OCI-LY7 (cell line): ENCODE measurements at regions of chr13 and their contacts with region 1.

Region 1: GRCh38 chr13:25001476-25002206 is 94.3 kb upstream of the PABPC3 start:
- DNase-seq: no peak
- H3K4me3 ChIP-seq: no peak overlapping the region
- H3K27ac ChIP-seq: no peak overlapping the region
- H3K4me1 ChIP-seq: no peaks in the 10 kb centered on the region
- CTCF ChIP-seq: no peak

Region 2: GRCh38 chr13:25037057-25037813 is 35.6 kb after region 1 on chr13:
- CTCF ChIA-PET with region 1: no interaction called
- POLR2A ChIA-PET with region 1: no interaction called
- intact Hi-C with region 1: loop called (anchors 1 kb)
- DNase-seq: peak; percentile 71
- H3K4me3 ChIP-seq: no peak overlapping the region
- H3K27ac ChIP-seq: no peak overlapping the region
- H3K4me1 ChIP-seq: no peaks in the 10 kb centered on the region
- CTCF ChIP-seq: peak; percentile 84

Region 3: DNA sequence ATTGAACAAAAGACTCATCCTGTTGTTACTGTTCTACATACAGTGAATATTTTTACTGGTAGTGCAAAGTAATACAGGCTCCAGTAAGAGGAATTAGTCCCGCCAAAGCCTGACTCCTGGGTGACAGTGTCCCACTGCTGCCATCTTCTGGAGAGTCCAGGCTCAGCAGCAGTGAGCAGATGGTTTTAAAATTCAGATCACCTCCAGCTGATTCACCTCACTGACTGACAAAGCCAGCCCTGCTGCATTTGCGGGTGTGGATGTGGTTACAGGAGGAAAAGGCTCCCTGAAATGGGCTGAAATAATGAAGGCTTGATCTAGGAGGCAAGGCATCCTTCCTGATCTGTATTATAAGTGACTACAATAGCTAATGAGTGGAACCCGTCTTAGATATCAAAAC is 112.6 kb after region 1 on chr13:
- CTCF ChIA-PET with region 1: no interaction called
- POLR2A ChIA-PET with region 1: no interaction called
- intact Hi-C with region 1: loop called (anchors 1 kb)
- DNase-seq: peak; percentile 79
- H3K4me3 ChIP-seq: no peak overlapping the region
- H3K27ac ChIP-seq: no peak overlapping the region
- H3K4me1 ChIP-seq: peaks cover 27% of the 10 kb centered on the region
- CTCF ChIP-seq: peak; percentile 94

Region 4: GRCh38 chr13:25171517-25172302 is 170.1 kb after region 1 on chr13 and contains the start of gene AMER2:
- CTCF ChIA-PET with region 1: no interaction called
- POLR2A ChIA-PET with region 1: no interaction called
- intact Hi-C with region 1: no loop called
- DNase-seq: no peak
- H3K4me3 ChIP-seq: no peak within 1 kb of the TSS
- H3K27ac ChIP-seq: no peak within 1 kb of the TSS
- H3K4me1 ChIP-seq: no peaks in the 10 kb centered on the region
- CTCF ChIP-seq: no peak
- total RNA-seq, gene AMER2: not detected in 2 replicates